Posterior cingulate gyrus (tissue), 11 donors: ENCODE measurements at regions of chr15 and their contacts with region 1.

Region 1: DNA sequence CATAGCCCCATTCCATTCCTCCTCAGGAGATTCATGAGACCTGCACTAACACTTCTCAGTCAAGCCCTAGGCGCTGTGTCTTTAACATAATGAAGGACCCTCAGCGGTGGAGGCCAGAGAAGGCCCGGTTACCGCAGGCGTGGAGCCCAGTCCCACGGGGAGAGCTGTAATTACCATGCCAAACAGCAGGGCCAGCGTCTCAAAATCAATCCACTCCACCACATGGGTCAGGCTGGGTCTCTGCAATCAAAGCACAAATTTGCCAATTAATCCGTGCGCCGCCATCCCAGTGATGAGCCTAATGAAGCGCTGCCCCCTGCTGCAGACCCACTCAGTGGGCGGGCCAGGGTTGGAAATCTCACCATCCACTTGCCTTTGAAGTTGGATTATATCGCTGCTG is 109.7 kb downstream of the OCA2 start:
- DNase-seq: no peak

Region 2: DNA sequence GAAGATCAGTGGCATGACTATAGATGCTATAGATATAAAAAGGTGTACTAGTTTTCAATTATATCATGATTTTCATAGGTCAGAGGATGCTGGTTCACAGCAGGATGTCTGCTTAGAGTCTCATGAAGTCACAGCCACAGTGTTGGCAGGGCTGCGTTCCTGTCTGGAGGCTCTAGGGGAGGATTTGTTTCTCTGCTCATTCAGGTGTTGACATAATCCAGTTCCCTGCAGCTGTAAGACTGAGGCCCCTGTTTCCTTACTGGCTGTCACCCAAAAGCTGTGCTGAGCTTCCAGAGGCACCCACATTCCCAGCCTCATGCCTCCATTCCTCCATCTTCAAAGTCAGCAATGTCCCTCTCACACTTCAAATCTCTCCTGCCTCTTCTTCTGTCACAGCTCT is 61.0 kb before region 1 on chr15:
- intact Hi-C with region 1: loop called (anchors 10 kb)
- DNase-seq: no peak